Activated CD4-positive, alpha-beta T cell treated with anti-CD3 and anti-CD28 coated beads for 36 hours (primary cell): ENCODE measurements at regions of chr13 and their contacts with region 1.

Region 1: GRCh38 chr13:37011002-37011401 is 10.4 kb downstream of the EXOSC8 start:
- DNase-seq: no peak
- ATAC-seq: peak; percentile 47
- H3K4me3 Mint-ChIP-seq: no peak overlapping the region
- H3K27ac Mint-ChIP-seq: no peak overlapping the region
- H3K4me1 Mint-ChIP-seq: peaks cover 7% of the 10 kb centered on the region
- H3K27me3 Mint-ChIP-seq: no peaks in the 10 kb centered on the region

Region 2: GRCh38 chr13:36382030-36382429 is 629.0 kb before region 1 on chr13:
- CTCF ChIA-PET with region 1: no interaction called
- POLR2A ChIA-PET with region 1: no interaction called
- intact Hi-C with region 1: no loop called
- DNase-seq: no peak
- ATAC-seq: peak; percentile 92
- H3K4me3 Mint-ChIP-seq: no peak overlapping the region
- H3K27ac Mint-ChIP-seq: no peak overlapping the region
- H3K4me1 Mint-ChIP-seq: peaks cover 2% of the 10 kb centered on the region
- H3K27me3 Mint-ChIP-seq: peaks cover 5% of the 10 kb centered on the region

Region 3: GRCh38 chr13:36973621-36974295 is 37.2 kb before region 1 on chr13:
- CTCF ChIA-PET with region 1: no interaction called
- POLR2A ChIA-PET with region 1: no interaction called
- intact Hi-C with region 1: no loop called
- DNase-seq: no peak
- ATAC-seq: no peak
- H3K4me3 Mint-ChIP-seq: no peak overlapping the region
- H3K27ac Mint-ChIP-seq: no peak overlapping the region
- H3K4me1 Mint-ChIP-seq: no peaks in the 10 kb centered on the region
- H3K27me3 Mint-ChIP-seq: no peaks in the 10 kb centered on the region

Region 4: DNA sequence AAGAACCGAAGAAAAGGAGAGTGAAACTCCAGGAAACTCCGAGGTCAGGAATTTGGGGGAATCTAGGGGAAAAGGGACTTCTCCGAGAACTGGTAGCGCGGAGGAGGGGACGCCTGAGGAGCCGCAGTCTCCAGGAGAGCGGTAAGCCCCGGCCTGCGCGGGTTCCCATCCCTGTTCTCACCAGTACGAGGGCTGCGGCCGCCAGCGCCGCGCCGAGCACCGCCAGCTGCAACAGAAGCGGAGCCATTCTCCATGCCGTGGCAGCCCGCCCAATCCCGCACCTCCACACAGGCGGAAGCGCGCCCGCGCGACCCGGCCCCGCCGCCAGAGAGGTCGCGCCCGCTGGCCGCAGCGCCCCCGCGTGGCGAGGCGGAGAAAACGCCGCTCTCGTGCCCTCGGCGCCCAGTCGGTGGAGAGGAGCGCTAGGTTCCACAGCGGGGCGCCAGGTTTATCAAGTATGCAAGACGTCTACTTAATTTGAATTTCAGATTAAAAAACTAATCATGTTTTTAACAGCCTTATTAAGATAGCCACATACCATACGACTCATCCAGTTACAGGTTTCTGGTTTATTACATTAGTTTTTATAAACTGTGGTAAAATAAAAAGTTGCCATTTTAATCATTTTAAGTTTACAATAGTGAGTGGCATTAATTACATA is 11.8 kb before region 1 on chr13 and contains the start of gene ALG5:
- CTCF ChIA-PET with region 1: interaction called, 17 read pairs
- POLR2A ChIA-PET with region 1: interaction called, 3 read pairs
- intact Hi-C with region 1: no loop called
- DNase-seq: peak; percentile 94
- ATAC-seq: peak; percentile 66
- H3K4me3 Mint-ChIP-seq: peak within 1 kb of the TSS; percentile 97
- H3K27ac Mint-ChIP-seq: peak within 1 kb of the TSS; percentile 100
- H3K4me1 Mint-ChIP-seq: peaks cover 29% of the 10 kb centered on the region
- H3K27me3 Mint-ChIP-seq: no peaks in the 10 kb centered on the region
- total RNA-seq, gene ALG5: 21.1 to 28.3 TPM

Region 5: GRCh38 chr13:37023871-37024270 is 12.9 kb after region 1 on chr13:
- CTCF ChIA-PET with region 1: interaction called, 5 read pairs
- POLR2A ChIA-PET with region 1: interaction called, 4 read pairs
- intact Hi-C with region 1: loop called in 1 of 2 experiments (anchors 2 kb)
- DNase-seq: no peak
- ATAC-seq: no peak
- H3K4me3 Mint-ChIP-seq: no peak overlapping the region
- H3K27ac Mint-ChIP-seq: no peak overlapping the region
- H3K4me1 Mint-ChIP-seq: no peaks in the 10 kb centered on the region
- H3K27me3 Mint-ChIP-seq: no peaks in the 10 kb centered on the region